Activated T-helper 2 cell treated with anti-CD3 and anti-CD28 coated beads, Interferon-gamma antibody, Interleukin-2, Interleukin-4, amounts not matched to agents 10 μg/mL and 5 μg/mL and 100 μg/mL, durations not matched to agents 14 hours and 24 hours and 36 hours (primary cell): ENCODE measurements at regions of chr3 and their contacts with region 1.

Region 1: GRCh38 chr3:136196401-136197158 is 445 bp upstream of the MSL2 start:
- DNase-seq: peak; percentile 99
- H3K4me3 Mint-ChIP-seq: peak overlapping the region; percentile 83
- H3K27ac Mint-ChIP-seq: peak overlapping the region; percentile 93
- H3K4me1 Mint-ChIP-seq: peaks cover 28% of the 10 kb centered on the region
- H3K27me3 Mint-ChIP-seq: no peaks in the 10 kb centered on the region

Region 2: GRCh38 chr3:135965506-135966270 is 230.9 kb before region 1 on chr3 and contains the start of gene PPP2R3A:
- intact Hi-C with region 1: loop called (anchors 10 kb)
- DNase-seq: peak; percentile 58
- H3K4me3 Mint-ChIP-seq: peak within 1 kb of the TSS; percentile 73
- H3K27ac Mint-ChIP-seq: no peak within 1 kb of the TSS
- H3K4me1 Mint-ChIP-seq: peaks cover 2% of the 10 kb centered on the region
- H3K27me3 Mint-ChIP-seq: peaks cover 37% of the 10 kb centered on the region
- total RNA-seq, gene PPP2R3A: 0.09 and 0.11 TPM in 2 replicates

Region 3: DNA sequence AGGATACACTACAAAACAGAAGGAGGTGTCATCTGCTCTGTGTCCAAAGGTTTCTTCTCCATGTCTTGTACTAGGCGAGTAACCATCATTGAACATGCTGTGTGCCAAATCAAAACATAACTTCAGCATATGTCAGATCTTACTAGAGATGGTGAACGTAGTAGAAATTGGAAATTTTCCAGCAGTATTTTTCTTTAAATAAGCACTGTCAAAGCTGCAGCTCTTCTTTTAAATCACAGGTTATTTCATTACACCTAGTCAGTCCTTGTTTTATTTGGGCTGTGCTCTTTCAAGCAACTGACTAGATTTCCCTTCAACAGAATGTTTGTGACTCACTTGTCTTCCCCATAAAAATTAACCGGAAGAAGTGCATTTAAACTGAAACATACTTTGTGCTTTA is 46.9 kb before region 1 on chr3:
- intact Hi-C with region 1: loop called (anchors 5 kb)
- DNase-seq: no peak
- H3K4me3 Mint-ChIP-seq: no peak overlapping the region
- H3K27ac Mint-ChIP-seq: peak overlapping the region; percentile 5
- H3K4me1 Mint-ChIP-seq: peaks cover 42% of the 10 kb centered on the region
- H3K27me3 Mint-ChIP-seq: no peaks in the 10 kb centered on the region

Region 4: GRCh38 chr3:136232413-136232812 is 35.8 kb after region 1 on chr3:
- intact Hi-C with region 1: no loop called
- DNase-seq: no peak
- H3K4me3 Mint-ChIP-seq: no peak overlapping the region
- H3K27ac Mint-ChIP-seq: no peak overlapping the region
- H3K4me1 Mint-ChIP-seq: no peaks in the 10 kb centered on the region
- H3K27me3 Mint-ChIP-seq: peaks cover 7% of the 10 kb centered on the region

Region 5: GRCh38 chr3:136250226-136250902 is 53.8 kb after region 1 on chr3 and contains the start of gene PCCB:
- intact Hi-C with region 1: loop called (anchors 1 kb)
- DNase-seq: peak; percentile 89
- H3K4me3 Mint-ChIP-seq: peak within 1 kb of the TSS; percentile 88
- H3K27ac Mint-ChIP-seq: peak within 1 kb of the TSS; percentile 90
- H3K4me1 Mint-ChIP-seq: peaks cover 17% of the 10 kb centered on the region
- H3K27me3 Mint-ChIP-seq: no peaks in the 10 kb centered on the region
- total RNA-seq, gene PCCB: 44.5 and 47.5 TPM in 2 replicates

Region 6: GRCh38 chr3:136752422-136753325 is 556.1 kb after region 1 on chr3:
- intact Hi-C with region 1: loop called (anchors 1 kb)
- DNase-seq: peak; percentile 99
- H3K4me3 Mint-ChIP-seq: peak overlapping the region; percentile 88
- H3K27ac Mint-ChIP-seq: peak overlapping the region; percentile 98
- H3K4me1 Mint-ChIP-seq: peaks cover 34% of the 10 kb centered on the region
- H3K27me3 Mint-ChIP-seq: no peaks in the 10 kb centered on the region

Region 7: GRCh38 chr3:136861890-136862616 is 665.5 kb after region 1 on chr3 and contains the start of gene NCK1:
- intact Hi-C with region 1: loop called (anchors 1 kb)
- DNase-seq: peak; percentile 98
- H3K4me3 Mint-ChIP-seq: peak within 1 kb of the TSS; percentile 95
- H3K27ac Mint-ChIP-seq: peak within 1 kb of the TSS; percentile 98
- H3K4me1 Mint-ChIP-seq: peaks cover 41% of the 10 kb centered on the region
- H3K27me3 Mint-ChIP-seq: no peaks in the 10 kb centered on the region
- total RNA-seq, gene NCK1: 40.2 and 41.9 TPM in 2 replicates

Region 8: DNA sequence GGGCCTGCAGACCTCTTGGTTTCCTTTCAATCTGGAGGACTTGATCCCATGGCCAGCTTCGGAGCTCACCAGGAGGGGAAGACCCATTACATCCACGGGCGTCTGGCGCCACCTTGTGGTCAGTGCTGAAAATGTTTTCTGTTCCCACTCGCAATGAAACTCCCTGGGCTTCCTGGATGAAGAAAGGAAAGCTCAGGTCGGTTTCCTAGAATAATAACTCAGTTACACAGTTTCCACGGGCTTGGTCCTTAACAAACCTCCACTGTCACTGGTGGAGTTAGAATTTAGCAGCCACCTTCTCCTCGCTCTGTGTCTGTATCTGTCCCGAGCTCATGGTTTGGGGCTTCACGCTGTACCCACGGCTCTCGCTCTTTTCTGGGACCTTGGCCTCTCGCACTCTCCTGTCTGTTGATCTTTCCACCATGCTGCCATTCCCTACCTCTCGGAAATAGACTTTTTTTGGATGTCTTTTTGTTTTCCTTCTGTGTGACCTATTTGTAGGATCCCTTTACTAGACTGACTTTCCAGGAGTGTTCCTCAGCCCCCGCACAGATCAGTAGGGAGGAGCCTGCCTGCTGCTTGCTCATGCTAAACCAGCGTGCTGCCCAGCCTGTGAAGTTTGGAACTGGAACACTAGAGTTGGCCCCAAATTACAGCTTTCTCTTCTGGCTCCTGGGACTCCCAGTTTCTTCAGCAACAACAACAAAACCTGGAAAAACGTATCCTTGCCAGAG is 817.5 kb after region 1 on chr3:
- intact Hi-C with region 1: loop called (anchors 5 kb)
- DNase-seq: peak; percentile 74
- H3K4me3 Mint-ChIP-seq: peak overlapping the region; percentile 77
- H3K27ac Mint-ChIP-seq: no peak overlapping the region
- H3K4me1 Mint-ChIP-seq: peaks cover 5% of the 10 kb centered on the region
- H3K27me3 Mint-ChIP-seq: peaks cover 3% of the 10 kb centered on the region